Endothelial cell of umbilical vein (primary cell): ENCODE measurements at regions of chr7 and their contacts with region 1.

Region 1: GRCh38 chr7:48088559-48089045 is 463 bp upstream of the UPP1 start:
- DNase-seq: no peak
- H3K4me3 ChIP-seq: peak overlapping the region; percentile 28 to 95 (median 54)
- H3K27ac ChIP-seq: peak overlapping the region; percentile 99
- H3K4me1 ChIP-seq: peaks cover 57% of the 10 kb centered on the region
- H3K27me3 ChIP-seq: no peaks in the 10 kb centered on the region
- CTCF ChIP-seq: no peak
- POLR2A ChIP-seq: peak; percentile 44

Region 2: GRCh38 chr7:47453093-47454049 is 635.2 kb before region 1 on chr7:
- CTCF ChIA-PET with region 1: no interaction called
- POLR2A ChIA-PET with region 1: no interaction called
- dilution Hi-C with region 1: no loop called
- intact Hi-C with region 1: loop called (anchors 10 kb)
- DNase-seq: peak; percentile 74
- H3K4me3 ChIP-seq: peak overlapping the region in 2 of 3 experiments; percentile 38 to 72
- H3K27ac ChIP-seq: peak overlapping the region; percentile 99
- H3K4me1 ChIP-seq: peaks cover 46% of the 10 kb centered on the region
- H3K27me3 ChIP-seq: no peaks in the 10 kb centered on the region
- CTCF ChIP-seq: no peak
- POLR2A ChIP-seq: no peak

Region 3: GRCh38 chr7:47937065-47937683 is 151.4 kb before region 1 on chr7:
- CTCF ChIA-PET with region 1: no interaction called
- POLR2A ChIA-PET with region 1: no interaction called
- dilution Hi-C with region 1: no loop called
- intact Hi-C with region 1: loop called (anchors 1 kb)
- DNase-seq: no peak
- H3K4me3 ChIP-seq: no peak overlapping the region
- H3K27ac ChIP-seq: no peak overlapping the region
- H3K4me1 ChIP-seq: peaks cover 22% of the 10 kb centered on the region
- H3K27me3 ChIP-seq: no peaks in the 10 kb centered on the region
- CTCF ChIP-seq: no peak
- POLR2A ChIP-seq: no peak

Region 4: GRCh38 chr7:47979145-47979831 is 109.3 kb before region 1 on chr7 and contains the start of gene HUS1:
- CTCF ChIA-PET with region 1: no interaction called
- POLR2A ChIA-PET with region 1: no interaction called
- dilution Hi-C with region 1: no loop called
- intact Hi-C with region 1: loop called (anchors 1 kb)
- DNase-seq: peak; percentile 52
- H3K4me3 ChIP-seq: peak within 1 kb of the TSS; percentile 70 to 93 (median 89)
- H3K27ac ChIP-seq: peak within 1 kb of the TSS; percentile 46
- H3K4me1 ChIP-seq: peaks cover 11% of the 10 kb centered on the region
- H3K27me3 ChIP-seq: peaks cover 0 to 4% of the 10 kb centered on the region in 2 experiments
- CTCF ChIP-seq: no peak
- POLR2A ChIP-seq: peak; percentile 43
- total RNA-seq, gene HUS1: 45.0 and 49.7 TPM in 2 replicates

Region 5: GRCh38 chr7:48035301-48035966 is 53.2 kb before region 1 on chr7 and contains the start of gene C7orf57:
- CTCF ChIA-PET with region 1: interaction called, 3 read pairs
- POLR2A ChIA-PET with region 1: no interaction called
- dilution Hi-C with region 1: no loop called
- intact Hi-C with region 1: loop called (anchors 1 kb)
- DNase-seq: peak; percentile 85
- H3K4me3 ChIP-seq: peak within 1 kb of the TSS; percentile 19 to 51 (median 43)
- H3K27ac ChIP-seq: no peak within 1 kb of the TSS
- H3K4me1 ChIP-seq: peaks cover 6% of the 10 kb centered on the region
- H3K27me3 ChIP-seq: peaks cover 16 to 26% of the 10 kb centered on the region in 2 experiments
- CTCF ChIP-seq: peak in 1 of 2 donors; percentile 37
- POLR2A ChIP-seq: no peak
- total RNA-seq, gene C7orf57: not detected in 2 replicates

Region 6: GRCh38 chr7:48130658-48131108 is 42.1 kb after region 1 on chr7:
- CTCF ChIA-PET with region 1: no interaction called
- POLR2A ChIA-PET with region 1: no interaction called
- dilution Hi-C with region 1: no loop called
- intact Hi-C with region 1: no loop called
- DNase-seq: no peak
- H3K4me3 ChIP-seq: no peak overlapping the region
- H3K27ac ChIP-seq: no peak overlapping the region
- H3K4me1 ChIP-seq: no peaks in the 10 kb centered on the region
- H3K27me3 ChIP-seq: peaks cover 3 to 12% of the 10 kb centered on the region in 2 experiments
- CTCF ChIP-seq: no peak
- POLR2A ChIP-seq: no peak

Region 7: GRCh38 chr7:48168159-48168558 is 79.6 kb after region 1 on chr7:
- CTCF ChIA-PET with region 1: no interaction called
- POLR2A ChIA-PET with region 1: no interaction called
- dilution Hi-C with region 1: no loop called
- intact Hi-C with region 1: no loop called
- DNase-seq: peak; percentile 82
- H3K4me3 ChIP-seq: no peak overlapping the region
- H3K27ac ChIP-seq: no peak overlapping the region
- H3K4me1 ChIP-seq: peaks cover 4% of the 10 kb centered on the region
- H3K27me3 ChIP-seq: no peaks in the 10 kb centered on the region
- CTCF ChIP-seq: peak; percentile 18 to 31
- POLR2A ChIP-seq: no peak

Region 8: DNA sequence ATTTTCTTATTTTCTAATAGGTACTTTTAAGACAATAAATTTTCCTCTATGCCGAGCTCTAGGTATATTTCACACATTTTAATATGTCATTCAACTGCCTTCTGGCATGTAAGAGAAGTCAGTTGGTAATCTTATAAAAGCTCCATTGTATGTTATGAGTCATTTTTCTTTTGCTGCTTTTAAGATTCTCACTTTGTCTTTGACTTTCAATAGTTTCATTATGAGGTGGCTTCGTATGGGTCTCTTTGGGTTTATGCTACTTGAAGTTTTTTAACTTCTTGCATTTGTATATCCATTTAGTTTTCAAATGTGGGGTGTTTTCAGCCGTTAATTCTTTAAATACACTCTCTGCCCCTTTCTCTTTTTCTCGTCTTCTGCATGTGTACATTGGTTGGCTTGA is 163.2 kb after region 1 on chr7:
- CTCF ChIA-PET with region 1: no interaction called
- POLR2A ChIA-PET with region 1: no interaction called
- dilution Hi-C with region 1: no loop called
- intact Hi-C with region 1: loop called (anchors 5 kb)
- DNase-seq: no peak
- H3K4me3 ChIP-seq: no peak overlapping the region
- H3K27ac ChIP-seq: no peak overlapping the region
- H3K4me1 ChIP-seq: peaks cover 29% of the 10 kb centered on the region
- H3K27me3 ChIP-seq: no peaks in the 10 kb centered on the region
- CTCF ChIP-seq: no peak
- POLR2A ChIP-seq: no peak